CD8-positive, alpha-beta T cell (primary cell): ENCODE measurements at regions of chr15 and their contacts with region 1.

Region 1: GRCh38 chr15:86743283-86743903 is 663.7 kb downstream of the AGBL1 start:
- DNase-seq: peak; percentile 25 to 75 (median 57)
- ATAC-seq: no peak
- H3K4me3 ChIP-seq: no peak overlapping the region
- H3K4me3 Mint-ChIP-seq: no peak overlapping the region
- H3K27ac ChIP-seq: no peak overlapping the region
- H3K27ac Mint-ChIP-seq: no peak overlapping the region
- H3K4me1 ChIP-seq: no peaks in the 10 kb centered on the region
- H3K4me1 Mint-ChIP-seq: no peaks in the 10 kb centered on the region
- H3K27me3 ChIP-seq: no peaks in the 10 kb centered on the region
- H3K27me3 Mint-ChIP-seq: no peaks in the 10 kb centered on the region
- CTCF ChIP-seq: peak; percentile 56

Region 2: DNA sequence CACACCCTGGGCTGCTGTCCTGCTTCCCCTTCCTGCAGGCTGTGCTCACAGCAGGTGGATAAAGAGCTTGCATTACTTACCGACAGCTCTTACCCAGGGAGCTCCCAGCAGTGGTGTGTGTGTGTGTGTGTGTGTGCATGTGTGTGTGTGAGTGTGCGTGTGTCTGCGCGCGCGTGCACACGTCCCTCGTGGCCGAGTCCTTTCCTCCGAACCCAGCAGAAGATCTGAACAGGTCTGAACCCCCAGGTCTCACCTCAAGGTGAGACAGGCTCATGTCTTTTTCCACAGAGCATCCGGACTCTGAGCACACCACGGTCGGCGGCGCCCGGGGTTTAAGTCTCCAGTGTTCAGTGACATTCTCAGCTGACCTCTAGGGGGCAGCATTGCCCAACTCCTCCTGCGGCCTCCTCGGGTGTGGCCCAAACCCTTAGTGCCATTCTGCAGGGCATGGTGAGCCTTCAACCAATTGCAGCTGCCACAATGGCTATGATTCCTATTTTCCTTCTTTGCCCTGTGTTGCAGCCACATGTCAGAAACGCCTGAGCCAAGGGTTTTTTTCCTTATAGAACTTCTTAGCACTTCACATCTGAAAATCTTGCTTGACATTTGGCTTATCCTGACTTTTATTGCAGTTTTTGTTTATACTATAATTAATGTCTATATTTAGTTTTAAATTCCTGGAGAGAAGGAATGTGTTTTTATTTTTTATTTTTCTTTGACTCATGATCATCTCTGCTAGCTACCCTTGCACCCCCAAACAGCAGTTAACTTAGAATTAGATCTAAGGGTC is 884.6 kb before region 1 on chr15:
- CTCF ChIA-PET with region 1: interaction called, 4 read pairs
- POLR2A ChIA-PET with region 1: no interaction called
- intact Hi-C with region 1: loop called (anchors 1 to 5 kb)
- DNase-seq: peak; percentile 54 to 80 (median 77)
- ATAC-seq: peak; percentile 87
- H3K4me3 ChIP-seq: no peak overlapping the region
- H3K4me3 Mint-ChIP-seq: no peak overlapping the region
- H3K27ac ChIP-seq: no peak overlapping the region
- H3K27ac Mint-ChIP-seq: no peak overlapping the region
- H3K4me1 ChIP-seq: peaks cover 4% of the 10 kb centered on the region
- H3K4me1 Mint-ChIP-seq: peaks cover 7% of the 10 kb centered on the region
- H3K27me3 ChIP-seq: peaks cover 0 to 2% of the 10 kb centered on the region in 2 experiments
- H3K27me3 Mint-ChIP-seq: peaks cover 29% of the 10 kb centered on the region
- CTCF ChIP-seq: peak; percentile 76

Region 3: DNA sequence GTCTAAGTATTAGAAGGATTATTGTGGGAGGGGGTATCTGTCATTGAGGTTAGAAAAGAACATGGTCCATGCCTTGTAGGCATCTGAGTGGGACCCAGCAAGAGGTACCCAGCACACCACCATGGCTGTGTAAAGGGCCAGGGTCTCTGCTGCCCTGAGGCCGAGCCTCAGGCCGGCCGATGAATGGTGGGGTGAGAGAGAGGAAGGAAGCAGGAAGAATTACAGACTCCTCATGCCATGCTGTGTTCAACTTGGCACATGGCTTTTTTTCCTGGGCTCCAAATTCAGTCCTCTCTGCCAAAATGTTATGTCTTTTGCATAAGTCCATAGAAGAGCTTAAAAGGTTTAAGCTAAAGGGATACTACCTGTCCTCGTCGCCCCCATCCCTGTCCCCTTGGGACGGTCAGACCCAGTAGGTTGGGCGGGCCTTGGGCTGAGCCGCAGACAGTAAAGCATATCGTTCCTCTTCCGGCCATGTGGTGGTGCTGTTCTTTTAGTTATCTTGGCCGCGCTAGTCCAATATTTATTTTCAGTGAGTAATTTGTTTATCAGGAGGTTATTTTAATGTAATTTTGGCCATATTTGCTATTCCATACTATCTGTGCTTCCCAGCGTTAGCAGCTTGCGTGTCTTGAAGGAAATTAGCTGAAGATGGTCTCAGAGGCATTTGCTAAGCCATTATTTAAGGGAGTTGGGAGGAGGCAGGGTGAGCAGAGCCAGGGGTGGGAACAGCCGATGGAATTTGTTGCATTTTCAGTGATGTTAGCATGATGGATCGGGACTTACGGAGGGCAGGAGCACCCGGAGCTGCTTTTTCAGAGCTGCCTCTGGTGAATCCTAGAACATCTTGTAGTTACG is 511.3 kb before region 1 on chr15:
- CTCF ChIA-PET with region 1: interaction called, 27 read pairs
- POLR2A ChIA-PET with region 1: no interaction called
- intact Hi-C with region 1: loop called in 1 of 2 experiments (anchors 1 kb)
- DNase-seq: peak in 7 of 9 experiments; percentile 7 to 60 (median 42)
- ATAC-seq: no peak
- H3K4me3 ChIP-seq: no peak overlapping the region
- H3K4me3 Mint-ChIP-seq: no peak overlapping the region
- H3K27ac ChIP-seq: no peak overlapping the region
- H3K27ac Mint-ChIP-seq: no peak overlapping the region
- H3K4me1 ChIP-seq: no peaks in the 10 kb centered on the region
- H3K4me1 Mint-ChIP-seq: peaks cover 3% of the 10 kb centered on the region
- H3K27me3 ChIP-seq: peaks cover 3% of the 10 kb centered on the region in 2 experiments
- H3K27me3 Mint-ChIP-seq: peaks cover 45% of the 10 kb centered on the region
- CTCF ChIP-seq: peak; percentile 46

Region 4: DNA sequence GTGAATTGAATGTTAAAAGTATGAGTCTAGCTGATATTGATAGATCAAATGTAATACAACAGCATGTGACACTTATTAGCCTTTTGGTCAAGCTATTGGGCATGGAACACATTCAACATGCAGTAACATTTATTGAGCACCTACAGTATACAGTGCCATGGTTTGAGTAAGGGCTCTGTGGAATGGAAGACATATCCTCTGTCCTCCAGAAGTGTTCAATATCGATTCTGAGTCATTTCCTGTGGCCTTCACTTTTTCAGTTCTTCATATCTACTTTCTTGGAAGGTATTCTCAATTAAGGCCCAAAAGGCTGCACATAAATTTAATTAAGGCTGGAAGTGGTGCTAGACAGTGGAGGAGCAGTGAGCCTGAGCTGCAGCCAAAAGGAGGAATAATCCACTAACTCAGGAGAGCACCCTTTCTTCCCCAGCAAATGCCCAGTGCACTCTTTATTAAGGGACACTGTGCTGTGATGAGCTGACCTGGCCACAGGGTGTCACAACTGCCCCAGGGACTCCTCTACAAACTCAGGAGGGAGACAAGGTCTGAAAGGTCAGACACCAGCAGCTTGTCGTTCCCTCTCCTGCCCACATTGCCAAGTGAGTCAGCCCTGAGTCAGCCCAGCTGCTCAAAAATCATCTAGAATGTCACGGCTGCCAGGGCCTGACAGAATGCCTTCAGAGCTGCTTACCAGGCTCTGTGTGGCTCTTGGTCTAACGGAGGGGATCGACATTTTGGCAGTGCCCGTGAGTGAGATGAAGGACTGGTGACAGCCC is 118.9 kb before region 1 on chr15:
- CTCF ChIA-PET with region 1: interaction called, 23 read pairs
- POLR2A ChIA-PET with region 1: no interaction called
- intact Hi-C with region 1: loop called (anchors 2 to 5 kb)
- DNase-seq: peak; percentile 1 to 72 (median 55)
- ATAC-seq: peak; percentile 66
- H3K4me3 ChIP-seq: no peak overlapping the region
- H3K4me3 Mint-ChIP-seq: no peak overlapping the region
- H3K27ac ChIP-seq: no peak overlapping the region
- H3K27ac Mint-ChIP-seq: no peak overlapping the region
- H3K4me1 ChIP-seq: peaks cover 7% of the 10 kb centered on the region
- H3K4me1 Mint-ChIP-seq: peaks cover 20% of the 10 kb centered on the region
- H3K27me3 ChIP-seq: no peaks in the 10 kb centered on the region
- H3K27me3 Mint-ChIP-seq: peaks cover 2% of the 10 kb centered on the region
- CTCF ChIP-seq: no peak

Region 5: DNA sequence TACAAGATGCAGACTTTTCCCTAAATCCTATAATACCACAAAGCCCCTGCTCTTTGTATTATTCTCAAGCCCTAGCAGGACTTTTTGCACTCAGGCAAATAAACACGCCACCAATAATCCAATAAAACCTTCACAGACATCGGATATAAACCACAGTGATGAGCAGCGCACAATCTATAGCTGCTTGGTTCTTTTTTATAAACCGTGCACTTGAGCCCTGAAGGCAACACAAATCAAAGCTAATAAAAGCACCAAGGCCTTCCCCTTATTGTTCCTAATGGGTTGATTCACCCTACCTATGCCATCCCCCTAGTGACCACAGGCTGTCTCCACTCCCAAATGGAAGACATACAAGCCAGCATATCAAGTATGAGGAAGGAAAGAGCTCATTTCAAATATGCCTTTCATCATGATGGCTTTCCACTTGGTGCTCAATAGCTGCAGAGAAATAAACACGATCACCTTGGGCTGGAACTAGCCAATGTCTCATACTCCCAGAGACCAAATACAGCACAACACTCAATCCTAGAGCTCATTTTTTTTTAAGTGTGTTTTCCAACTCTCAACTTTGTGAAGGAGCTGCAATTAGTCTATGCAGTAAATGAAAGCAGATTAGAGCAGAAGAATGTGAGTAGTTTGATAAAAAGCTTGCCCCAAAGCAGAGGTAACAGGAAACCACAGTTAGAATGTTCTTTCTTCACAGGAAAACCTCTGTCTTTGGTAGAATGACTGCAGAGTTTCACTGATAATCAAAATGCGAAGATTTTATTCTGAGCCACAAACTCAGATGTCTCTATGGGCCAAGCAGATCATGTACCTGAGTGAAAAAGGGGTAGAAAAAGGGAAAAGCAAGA is 89.8 kb before region 1 on chr15:
- CTCF ChIA-PET with region 1: interaction called, 10 read pairs
- POLR2A ChIA-PET with region 1: no interaction called
- intact Hi-C with region 1: no loop called
- DNase-seq: peak in 3 of 9 experiments; percentile 36 to 56 (median 50)
- ATAC-seq: peak; percentile 52
- H3K4me3 ChIP-seq: peak overlapping the region in 1 of 2 experiments; percentile 14
- H3K4me3 Mint-ChIP-seq: peak overlapping the region; percentile 72
- H3K27ac ChIP-seq: peak overlapping the region in 1 of 2 experiments; percentile 46
- H3K27ac Mint-ChIP-seq: peak overlapping the region; percentile 87
- H3K4me1 ChIP-seq: peaks cover 69% of the 10 kb centered on the region
- H3K4me1 Mint-ChIP-seq: peaks cover 64% of the 10 kb centered on the region
- H3K27me3 ChIP-seq: no peaks in the 10 kb centered on the region
- H3K27me3 Mint-ChIP-seq: no peaks in the 10 kb centered on the region
- CTCF ChIP-seq: no peak

Region 6: GRCh38 chr15:86802244-86802643 is 58.9 kb after region 1 on chr15:
- CTCF ChIA-PET with region 1: no interaction called
- POLR2A ChIA-PET with region 1: no interaction called
- intact Hi-C with region 1: no loop called
- DNase-seq: no peak
- ATAC-seq: no peak
- H3K4me3 ChIP-seq: no peak overlapping the region
- H3K4me3 Mint-ChIP-seq: no peak overlapping the region
- H3K27ac ChIP-seq: no peak overlapping the region
- H3K27ac Mint-ChIP-seq: no peak overlapping the region
- H3K4me1 ChIP-seq: no peaks in the 10 kb centered on the region
- H3K4me1 Mint-ChIP-seq: no peaks in the 10 kb centered on the region
- H3K27me3 ChIP-seq: no peaks in the 10 kb centered on the region
- H3K27me3 Mint-ChIP-seq: peaks cover 3% of the 10 kb centered on the region
- CTCF ChIP-seq: no peak